ENCODE measurements at regions of chr19 and their contacts with region 1.

Region 1: GRCh38 chr19:44071824-44072542 is at the start of gene ZNF284:
- DNase-seq: peak; percentile 82 to 87
- ATAC-seq: peak; percentile 100
- H3K4me3 ChIP-seq: peak within 1 kb of the TSS; percentile 60 to 83 (median 77)
- H3K27ac ChIP-seq: peak within 1 kb of the TSS; percentile 56 to 79 (median 59)
- H3K4me1 ChIP-seq: peaks cover 10 to 13% of the 10 kb centered on the region in 2 donors
- H3K27me3 ChIP-seq: no peaks in the 10 kb centered on the region
- CTCF ChIP-seq: no peak
- POLR2A ChIP-seq: peak in 1 of 2 donors; percentile 20
- total RNA-seq, gene ZNF284: 0.38 to 1.3 (median 0.63) TPM

Region 2: GRCh38 chr19:44093931-44094765 is 22.2 kb after region 1 on chr19 and contains the start of gene ZNF224:
- in situ Hi-C with region 1: no loop called
- intact Hi-C with region 1: loop called (anchors 1 kb)
- DNase-seq: peak; percentile 85 to 87
- ATAC-seq: peak; percentile 100
- H3K4me3 ChIP-seq: peak within 1 kb of the TSS; percentile 76 to 91 (median 80)
- H3K27ac ChIP-seq: peak within 1 kb of the TSS; percentile 70 to 82 (median 73)
- H3K4me1 ChIP-seq: peaks cover 7 to 10% of the 10 kb centered on the region in 2 donors
- H3K27me3 ChIP-seq: no peaks in the 10 kb centered on the region
- CTCF ChIP-seq: no peak
- POLR2A ChIP-seq: peak in 1 of 2 donors; percentile 41
- total RNA-seq, gene ZNF224: 4.9 to 14.1 (median 6.9) TPM

Region 3: DNA sequence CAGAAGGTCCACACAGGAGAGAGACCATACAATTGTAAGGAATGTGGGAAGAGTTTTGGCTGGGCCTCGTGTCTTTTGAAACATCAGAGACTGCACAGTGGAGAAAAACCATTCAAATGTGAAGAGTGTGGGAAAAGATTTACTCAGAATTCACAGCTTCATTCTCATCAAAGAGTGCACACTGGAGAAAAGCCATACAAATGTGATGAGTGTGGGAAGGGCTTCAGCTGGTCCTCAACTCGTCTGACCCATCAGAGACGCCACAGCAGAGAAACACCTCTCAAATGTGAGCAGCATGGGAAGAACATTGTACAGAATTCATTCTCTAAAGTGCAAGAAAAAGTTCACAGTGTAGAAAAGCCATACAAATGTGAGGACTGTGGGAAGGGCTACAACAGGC is 35.8 kb after region 1 on chr19:
- in situ Hi-C with region 1: no loop called
- intact Hi-C with region 1: no loop called
- DNase-seq: no peak
- ATAC-seq: no peak
- H3K4me3 ChIP-seq: no peak overlapping the region
- H3K27ac ChIP-seq: no peak overlapping the region
- H3K4me1 ChIP-seq: peaks cover 8 to 9% of the 10 kb centered on the region in 2 donors
- H3K27me3 ChIP-seq: no peaks in the 10 kb centered on the region
- CTCF ChIP-seq: no peak
- POLR2A ChIP-seq: no peak

Region 4: GRCh38 chr19:44190020-44190419 is 118.0 kb after region 1 on chr19:
- in situ Hi-C with region 1: no loop called
- intact Hi-C with region 1: no loop called
- DNase-seq: no peak
- ATAC-seq: no peak
- H3K4me3 ChIP-seq: no peak overlapping the region
- H3K27ac ChIP-seq: no peak overlapping the region
- H3K4me1 ChIP-seq: no peaks in the 10 kb centered on the region
- H3K27me3 ChIP-seq: no peaks in the 10 kb centered on the region
- CTCF ChIP-seq: no peak
- POLR2A ChIP-seq: no peak

Region 5: GRCh38 chr19:44304659-44305193 is 232.7 kb after region 1 on chr19 and contains the start of gene ZNF235:
- in situ Hi-C with region 1: no loop called
- intact Hi-C with region 1: loop called (anchors 1 kb)
- DNase-seq: peak; percentile 88 to 94
- ATAC-seq: peak; percentile 100
- H3K4me3 ChIP-seq: peak within 1 kb of the TSS; percentile 64 to 86 (median 78)
- H3K27ac ChIP-seq: peak within 1 kb of the TSS; percentile 77 to 87 (median 82)
- H3K4me1 ChIP-seq: peaks cover 3 to 12% of the 10 kb centered on the region in 2 donors
- H3K27me3 ChIP-seq: no peaks in the 10 kb centered on the region
- CTCF ChIP-seq: no peak
- POLR2A ChIP-seq: peak in 1 of 2 donors; percentile 42
- total RNA-seq, gene ZNF235: 1.9 to 3.3 (median 2.1) TPM